Naive thymus-derived CD8-positive, alpha-beta T cell (primary cell): ENCODE measurements at regions of chrX and their contacts with region 1.

Region 1: DNA sequence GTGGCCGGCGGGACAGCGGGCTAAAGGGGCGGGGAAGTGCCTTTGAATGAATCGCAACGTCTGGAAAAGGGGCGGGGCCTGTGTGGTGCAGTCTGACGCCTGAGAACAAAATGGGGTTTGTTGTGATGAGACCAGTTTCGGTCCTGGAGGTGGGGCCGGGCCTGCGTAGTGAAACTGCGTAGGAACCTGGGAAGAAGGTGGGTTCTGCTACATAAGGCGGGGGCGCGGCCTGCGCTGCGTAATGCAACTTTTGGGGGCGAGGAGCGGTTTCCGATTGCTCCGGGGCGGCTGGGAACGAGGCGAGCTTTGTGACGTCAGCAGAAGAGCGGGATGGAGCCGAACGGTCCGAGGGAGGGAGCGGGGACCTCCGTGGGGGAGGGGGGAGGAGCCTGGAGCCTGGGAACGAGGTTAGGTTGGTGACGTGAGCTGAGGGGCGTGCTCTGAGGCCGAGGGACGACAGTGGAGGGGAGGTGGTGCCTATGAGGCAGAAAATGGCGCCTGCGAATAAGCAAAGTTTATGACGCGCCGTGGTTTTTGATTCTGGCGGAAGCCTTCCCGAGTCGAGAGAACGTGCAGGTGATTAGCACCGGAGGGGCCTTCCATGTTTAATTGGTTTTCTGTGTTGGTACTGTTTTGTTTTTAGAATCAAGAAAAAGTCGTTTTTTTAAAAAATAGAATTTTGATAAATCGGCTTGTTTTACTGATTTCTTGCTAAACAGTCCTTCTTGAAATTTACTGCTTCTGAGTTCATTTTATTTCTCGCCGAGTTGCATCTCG is 716 bp downstream of the USP11 start:
- DNase-seq: peak; percentile 80 to 98 (median 94)
- ATAC-seq: peak; percentile 83 to 86
- H3K4me3 Mint-ChIP-seq: peak overlapping the region; percentile 89 to 98 (median 96)
- H3K27ac Mint-ChIP-seq: peak overlapping the region; percentile 97 to 100 (median 99)
- H3K4me1 Mint-ChIP-seq: peaks cover 11 to 40% (median 25%) of the 10 kb centered on the region in 4 donors
- H3K27me3 Mint-ChIP-seq: peaks cover 0 to 3% (median 0%) of the 10 kb centered on the region in 5 donors

Region 2: GRCh38 chrX:47144626-47145394 is 88.7 kb before region 1 on chrX and contains the starts of genes NDUFB11 and RBM10:
- POLR2A ChIA-PET with region 1: interaction called, 24 read pairs
- DNase-seq: peak; percentile 68 to 95 (median 86)
- ATAC-seq: peak; percentile 87 to 89
- H3K4me3 Mint-ChIP-seq: peak within 1 kb of the TSS; percentile 93 to 99 (median 96)
- H3K27ac Mint-ChIP-seq: peak within 1 kb of the TSS; percentile 94 to 98 (median 98)
- H3K4me1 Mint-ChIP-seq: peaks cover 16 to 39% (median 34%) of the 10 kb centered on the region in 4 donors
- H3K27me3 Mint-ChIP-seq: no peaks in the 10 kb centered on the region
- polyA plus RNA-seq, gene NDUFB11: 171 to 185 (median 175) TPM
- polyA plus RNA-seq, gene RBM10: 17.6 to 39.2 (median 27.9) TPM

Region 3: DNA sequence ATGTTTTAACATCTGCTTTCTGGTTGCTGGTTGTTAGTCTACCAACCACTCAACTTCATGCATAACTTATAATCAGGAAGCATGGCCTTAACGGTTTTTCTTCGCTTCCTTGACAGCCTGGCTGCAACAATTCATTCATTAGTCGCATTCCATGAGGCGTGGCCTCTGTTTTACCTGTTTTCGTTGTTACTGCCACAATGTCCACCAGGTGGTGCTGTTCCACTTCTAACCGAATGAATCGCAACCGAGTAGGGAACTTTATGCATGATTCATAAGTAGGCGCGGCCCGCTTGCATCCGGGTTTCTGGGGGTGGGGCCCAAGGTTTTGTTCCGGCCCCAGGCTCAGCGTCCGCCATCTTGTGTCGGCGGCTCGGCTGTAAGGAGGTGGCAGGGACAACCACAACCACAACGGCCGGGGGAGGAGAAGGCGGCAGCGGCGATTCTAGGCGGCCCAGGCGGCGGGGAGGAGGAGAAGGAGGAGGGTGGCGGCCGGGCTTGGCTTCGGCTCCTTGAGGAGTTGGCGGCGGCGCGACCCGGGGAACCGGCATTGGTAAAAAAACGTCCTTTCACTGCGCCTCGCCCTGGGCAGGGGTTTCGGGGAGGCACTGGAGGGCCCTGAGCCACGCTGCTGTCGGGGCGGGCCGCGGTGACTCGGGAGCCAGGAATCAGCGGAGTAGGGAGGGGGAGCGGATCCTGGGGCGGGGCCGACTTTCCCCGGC is 39.9 kb before region 1 on chrX and contains the start of gene UBA1:
- POLR2A ChIA-PET with region 1: interaction called, 19 read pairs
- DNase-seq: peak; percentile 75 to 97 (median 90)
- ATAC-seq: peak; percentile 78 to 79
- H3K4me3 Mint-ChIP-seq: peak within 1 kb of the TSS; percentile 92 to 100 (median 98)
- H3K27ac Mint-ChIP-seq: peak within 1 kb of the TSS; percentile 92 to 100 (median 100)
- H3K4me1 Mint-ChIP-seq: peaks cover 25 to 65% (median 52%) of the 10 kb centered on the region in 4 donors
- H3K27me3 Mint-ChIP-seq: no peaks in the 10 kb centered on the region
- polyA plus RNA-seq, gene UBA1: 156 to 176 (median 163) TPM

Region 4: GRCh38 chrX:47204970-47205369 is 28.6 kb before region 1 on chrX:
- POLR2A ChIA-PET with region 1: no interaction called
- DNase-seq: no peak
- ATAC-seq: no peak
- H3K4me3 Mint-ChIP-seq: no peak overlapping the region
- H3K27ac Mint-ChIP-seq: peak overlapping the region in 1 of 10 donors; percentile 18
- H3K4me1 Mint-ChIP-seq: peaks cover 0 to 1% (median 0%) of the 10 kb centered on the region in 4 donors
- H3K27me3 Mint-ChIP-seq: no peaks in the 10 kb centered on the region

Region 5: DNA sequence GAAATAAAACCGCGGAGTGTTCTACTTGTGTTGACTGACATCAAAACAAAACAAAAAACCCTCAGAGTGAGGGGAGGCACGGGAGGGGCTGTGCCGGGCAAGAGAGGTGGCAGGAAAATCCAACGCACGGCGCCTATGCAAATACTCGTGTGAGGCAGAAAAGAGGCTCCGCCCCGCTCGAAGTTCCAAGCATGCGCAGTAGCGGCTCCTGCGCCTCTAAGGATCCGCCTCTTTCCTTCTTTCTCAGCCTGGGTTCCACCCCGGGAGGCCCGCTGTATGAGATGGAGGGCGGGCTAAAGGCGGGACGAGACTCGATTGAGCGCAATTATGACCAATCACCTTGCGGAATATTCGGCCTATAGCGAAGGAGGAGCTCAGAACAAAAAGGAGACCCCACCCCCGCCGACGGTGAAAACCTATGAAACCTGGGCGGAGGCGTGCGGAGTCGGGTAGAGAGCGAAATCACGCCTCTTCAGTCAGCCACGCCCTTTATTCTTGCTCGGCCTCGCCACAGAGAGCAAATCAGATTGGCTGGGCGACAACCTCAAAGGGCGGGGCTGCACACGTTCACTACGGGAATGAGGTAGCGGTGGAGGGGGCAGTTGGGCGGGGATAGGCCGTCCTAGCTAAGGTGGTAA is 15.8 kb before region 1 on chrX:
- POLR2A ChIA-PET with region 1: interaction called, 88 read pairs
- DNase-seq: peak; percentile 82 to 100 (median 96)
- ATAC-seq: peak; percentile 81 to 83
- H3K4me3 Mint-ChIP-seq: peak overlapping the region; percentile 88 to 98 (median 94)
- H3K27ac Mint-ChIP-seq: peak overlapping the region; percentile 96 to 100 (median 99)
- H3K4me1 Mint-ChIP-seq: peaks cover 30 to 53% (median 44%) of the 10 kb centered on the region in 4 donors
- H3K27me3 Mint-ChIP-seq: no peaks in the 10 kb centered on the region